ENCODE measurements at regions of chr15 and their contacts with region 1.

Region 1: DNA sequence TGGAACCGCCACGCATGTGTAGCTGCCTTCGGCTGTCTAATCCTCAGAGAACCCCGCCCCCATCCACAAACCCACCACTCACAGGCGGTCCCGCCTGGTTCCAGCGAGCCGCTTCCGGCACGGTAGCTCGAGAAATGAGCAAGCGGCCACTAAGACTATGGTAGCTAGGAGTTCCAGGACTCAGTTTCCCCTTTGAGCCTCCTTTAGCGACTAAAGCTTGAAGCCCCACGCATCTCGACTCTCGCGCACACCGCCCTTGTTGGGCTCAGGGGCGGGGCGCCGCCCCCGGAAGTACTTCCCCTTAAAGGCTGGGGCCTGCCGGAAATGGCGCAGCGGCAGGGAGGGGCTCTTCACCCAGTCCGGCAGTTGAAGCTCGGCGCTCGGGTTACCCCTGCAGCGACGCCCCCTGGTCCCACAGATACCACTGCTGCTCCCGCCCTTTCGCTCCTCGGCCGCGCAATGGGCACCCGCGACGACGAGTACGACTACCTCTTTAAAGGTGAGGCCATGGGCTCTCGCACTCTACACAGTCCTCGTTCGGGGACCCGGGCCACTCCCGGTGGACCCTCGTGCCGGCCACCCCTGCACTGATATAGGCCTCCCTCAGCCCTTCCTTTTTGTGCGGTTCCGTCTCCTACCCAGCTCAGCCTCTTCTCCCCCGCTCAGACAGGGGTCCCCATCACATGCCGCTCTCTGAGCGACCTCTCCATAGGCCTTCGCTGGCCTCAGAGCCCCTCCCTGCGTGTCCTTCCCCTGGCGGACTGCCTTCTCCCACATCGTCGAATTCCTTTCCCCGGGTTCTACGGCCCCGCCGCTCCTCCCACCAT is at the start of gene RAB11A:
- DNase-seq: peak; percentile 94
- ATAC-seq: peak; percentile 94
- H3K4me3 Mint-ChIP-seq: peak within 1 kb of the TSS; percentile 99
- H3K27ac Mint-ChIP-seq: peak within 1 kb of the TSS; percentile 97
- H3K4me1 Mint-ChIP-seq: peaks cover 29% of the 10 kb centered on the region
- H3K27me3 Mint-ChIP-seq: peaks cover 4% of the 10 kb centered on the region
- CTCF ChIP-seq: no peak
- total RNA-seq, gene RAB11A: 98.2 and 104 TPM in 2 replicates

Region 2: GRCh38 chr15:64930019-64930652 is 939.2 kb before region 1 on chr15:
- CTCF ChIA-PET with region 1: no interaction called
- POLR2A ChIA-PET with region 1: no interaction called
- intact Hi-C with region 1: no loop called
- DNase-seq: no peak
- ATAC-seq: no peak
- H3K4me3 Mint-ChIP-seq: no peak overlapping the region
- H3K27ac Mint-ChIP-seq: no peak overlapping the region
- H3K4me1 Mint-ChIP-seq: peaks cover 12% of the 10 kb centered on the region
- H3K27me3 Mint-ChIP-seq: no peaks in the 10 kb centered on the region
- CTCF ChIP-seq: no peak

Region 3: DNA sequence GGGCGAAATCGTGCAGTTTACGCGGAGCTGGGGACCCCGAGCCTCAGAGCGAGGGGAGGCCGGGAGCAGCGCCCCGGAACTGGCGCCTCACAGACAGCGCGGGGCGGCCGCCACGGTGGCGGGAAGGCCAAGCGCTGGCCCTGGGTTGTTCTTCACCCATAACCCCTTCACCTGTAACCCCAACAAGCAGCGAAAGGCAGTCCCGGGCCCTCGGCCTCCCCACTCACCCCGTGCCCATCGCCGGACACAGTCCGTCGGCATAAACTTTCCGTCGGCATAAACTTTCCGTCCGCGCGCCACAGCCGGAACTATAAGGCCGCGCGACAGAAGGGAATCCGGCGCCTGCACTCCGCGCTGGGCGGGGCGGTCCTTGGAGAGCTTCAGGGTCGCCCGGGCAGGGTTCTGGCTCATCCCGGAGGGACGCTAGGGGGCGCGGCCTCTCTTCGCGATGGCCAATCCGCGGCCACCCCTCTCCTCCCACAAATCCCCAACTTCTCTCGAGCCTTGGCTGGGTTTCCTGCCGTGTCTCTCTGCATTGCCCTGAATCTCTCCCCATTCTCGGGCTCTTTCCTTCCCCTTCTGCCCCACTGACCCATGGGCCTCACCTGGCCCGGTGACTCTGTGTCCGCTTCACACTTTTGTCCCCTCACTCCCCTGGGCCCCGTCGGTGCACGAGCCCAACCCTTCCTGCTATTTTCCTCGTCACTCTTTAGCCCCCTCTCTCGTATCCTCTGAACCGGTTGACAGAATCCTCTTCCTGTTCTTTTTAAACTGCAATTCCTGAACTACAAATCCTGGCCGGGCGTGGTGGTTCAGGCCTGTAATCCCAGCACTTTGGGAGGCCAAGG is 258.2 kb before region 1 on chr15 and contains the start of gene INTS14:
- CTCF ChIA-PET with region 1: interaction called, 7 read pairs
- POLR2A ChIA-PET with region 1: interaction called, 19 read pairs
- intact Hi-C with region 1: loop called (anchors 1 kb)
- DNase-seq: peak; percentile 89
- ATAC-seq: peak; percentile 98
- H3K4me3 Mint-ChIP-seq: peak within 1 kb of the TSS; percentile 92
- H3K27ac Mint-ChIP-seq: peak within 1 kb of the TSS; percentile 91
- H3K4me1 Mint-ChIP-seq: peaks cover 35% of the 10 kb centered on the region
- H3K27me3 Mint-ChIP-seq: no peaks in the 10 kb centered on the region
- CTCF ChIP-seq: no peak
- total RNA-seq, gene INTS14: 37.6 and 41.2 TPM in 2 replicates

Region 4: GRCh38 chr15:65792130-65792987 is 77.0 kb before region 1 on chr15 and contains the start of gene DENND4A:
- CTCF ChIA-PET with region 1: interaction called, 5 read pairs
- POLR2A ChIA-PET with region 1: interaction called, 68 read pairs
- intact Hi-C with region 1: loop called (anchors 1 kb)
- DNase-seq: peak; percentile 95
- ATAC-seq: peak; percentile 83
- H3K4me3 Mint-ChIP-seq: peak within 1 kb of the TSS; percentile 90
- H3K27ac Mint-ChIP-seq: peak within 1 kb of the TSS; percentile 98
- H3K4me1 Mint-ChIP-seq: peaks cover 64% of the 10 kb centered on the region
- H3K27me3 Mint-ChIP-seq: no peaks in the 10 kb centered on the region
- CTCF ChIP-seq: no peak
- total RNA-seq, gene DENND4A: 135 and 166 TPM in 2 replicates

Region 5: DNA sequence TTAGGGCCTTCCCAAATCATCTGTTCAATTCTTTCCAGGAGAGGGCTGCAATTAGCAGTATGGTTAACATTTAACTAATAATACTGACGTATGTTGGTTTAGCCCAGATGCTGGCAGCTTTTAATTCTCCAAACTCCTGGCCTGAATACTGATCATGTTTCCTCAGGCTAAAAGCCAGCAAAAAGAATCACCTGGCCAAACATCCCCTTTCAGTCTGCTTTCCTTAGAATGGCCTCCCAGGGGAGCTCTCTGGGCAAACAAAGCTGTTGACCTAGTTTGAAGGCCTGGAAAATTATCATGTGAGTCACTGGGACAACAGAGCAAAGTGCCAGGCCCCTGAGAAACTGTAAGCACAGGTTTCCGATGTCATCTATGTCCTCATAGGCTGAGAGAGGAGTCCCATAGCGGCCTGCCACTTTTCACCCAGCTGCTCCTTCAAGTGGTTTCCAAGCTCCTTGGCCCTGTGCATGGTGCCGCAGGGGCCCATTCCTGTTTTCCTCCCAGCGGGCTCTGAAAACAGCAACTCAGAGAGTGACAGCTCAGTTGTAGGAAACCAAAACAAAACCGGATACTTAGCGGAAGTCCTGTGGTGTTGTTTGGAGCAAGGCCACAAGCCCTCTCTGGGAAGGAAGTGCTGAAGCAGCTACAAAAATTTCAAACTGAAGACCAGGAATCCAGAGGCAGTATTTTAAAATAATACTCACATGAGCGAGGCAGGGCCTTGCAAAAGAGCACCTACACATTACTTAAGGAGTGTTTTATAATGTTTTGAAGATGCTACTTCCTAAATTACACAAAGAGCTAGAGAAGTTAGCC is 36.6 kb before region 1 on chr15:
- CTCF ChIA-PET with region 1: no interaction called
- POLR2A ChIA-PET with region 1: interaction called, 11 read pairs
- intact Hi-C with region 1: loop called (anchors 5 kb)
- DNase-seq: peak; percentile 38
- ATAC-seq: peak; percentile 59
- H3K4me3 Mint-ChIP-seq: peak overlapping the region; percentile 68
- H3K27ac Mint-ChIP-seq: peak overlapping the region; percentile 86
- H3K4me1 Mint-ChIP-seq: peaks cover 64% of the 10 kb centered on the region
- H3K27me3 Mint-ChIP-seq: no peaks in the 10 kb centered on the region
- CTCF ChIP-seq: no peak

Region 6: DNA sequence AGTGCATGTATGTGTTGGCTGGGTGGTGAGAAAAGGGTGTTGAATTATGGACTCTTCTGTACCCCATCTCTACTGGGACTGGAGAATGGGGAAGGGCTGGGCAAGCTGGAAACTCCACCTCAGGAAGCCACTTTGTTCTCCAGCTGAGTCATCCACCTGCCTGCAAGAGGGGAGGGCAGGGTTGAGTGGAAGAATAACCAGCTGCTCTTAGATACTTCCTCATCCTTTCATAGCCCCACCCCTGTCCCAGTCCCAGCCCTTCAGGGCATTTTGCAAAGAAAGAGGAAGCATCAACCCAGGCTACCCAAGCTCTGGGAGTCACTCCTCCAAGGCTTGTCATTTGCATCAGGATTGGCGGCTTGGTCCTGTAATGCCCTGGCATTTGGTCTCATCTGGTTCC is 33.0 kb after region 1 on chr15:
- CTCF ChIA-PET with region 1: interaction called, 3 read pairs
- POLR2A ChIA-PET with region 1: interaction called, 15 read pairs
- intact Hi-C with region 1: loop called (anchors 1 kb)
- DNase-seq: peak; percentile 46
- ATAC-seq: peak; percentile 99
- H3K4me3 Mint-ChIP-seq: peak overlapping the region; percentile 17
- H3K27ac Mint-ChIP-seq: peak overlapping the region; percentile 61
- H3K4me1 Mint-ChIP-seq: peaks cover 43% of the 10 kb centered on the region
- H3K27me3 Mint-ChIP-seq: no peaks in the 10 kb centered on the region
- CTCF ChIP-seq: no peak

Region 7: GRCh38 chr15:66287461-66288057 is 418.2 kb after region 1 on chr15:
- CTCF ChIA-PET with region 1: no interaction called
- POLR2A ChIA-PET with region 1: no interaction called
- intact Hi-C with region 1: loop called (anchors 2 kb)
- DNase-seq: no peak
- ATAC-seq: no peak
- H3K4me3 Mint-ChIP-seq: no peak overlapping the region
- H3K27ac Mint-ChIP-seq: no peak overlapping the region
- H3K4me1 Mint-ChIP-seq: peaks cover 18% of the 10 kb centered on the region
- H3K27me3 Mint-ChIP-seq: no peaks in the 10 kb centered on the region
- CTCF ChIP-seq: peak; percentile 79

Measured in activated B cell treated with CpG ODN at 0.5 μM for 24 hours (primary cell).